ENCODE measurements at regions of chr1 and their contacts with region 1.

Region 1: DNA sequence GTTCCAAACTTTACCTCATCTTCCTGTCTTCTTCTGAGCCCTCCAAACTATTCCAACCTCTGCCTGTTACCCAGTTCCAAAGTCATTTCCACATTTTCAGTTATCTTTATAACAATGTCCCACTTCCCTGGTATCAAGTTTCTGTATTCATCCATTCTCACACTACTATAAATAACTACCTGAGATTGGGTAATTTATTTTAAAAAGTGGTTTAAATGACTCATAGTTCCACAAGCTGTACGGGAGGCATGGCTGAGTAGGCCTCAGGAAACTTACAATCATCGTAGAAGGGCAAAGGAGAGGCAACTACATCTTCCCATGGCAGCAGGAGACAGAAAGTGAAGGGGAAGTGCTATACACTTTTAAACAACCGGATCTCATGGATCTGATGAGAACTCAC is 428.5 kb upstream of the RGS18 start:
- DNase-seq: no peak
- ATAC-seq: no peak
- H3K4me3 ChIP-seq: no peak overlapping the region
- H3K27ac ChIP-seq: no peak overlapping the region
- H3K4me1 ChIP-seq: no peaks in the 10 kb centered on the region
- H3K27me3 ChIP-seq: no peaks in the 10 kb centered on the region
- CTCF ChIP-seq: no peak

Region 2: DNA sequence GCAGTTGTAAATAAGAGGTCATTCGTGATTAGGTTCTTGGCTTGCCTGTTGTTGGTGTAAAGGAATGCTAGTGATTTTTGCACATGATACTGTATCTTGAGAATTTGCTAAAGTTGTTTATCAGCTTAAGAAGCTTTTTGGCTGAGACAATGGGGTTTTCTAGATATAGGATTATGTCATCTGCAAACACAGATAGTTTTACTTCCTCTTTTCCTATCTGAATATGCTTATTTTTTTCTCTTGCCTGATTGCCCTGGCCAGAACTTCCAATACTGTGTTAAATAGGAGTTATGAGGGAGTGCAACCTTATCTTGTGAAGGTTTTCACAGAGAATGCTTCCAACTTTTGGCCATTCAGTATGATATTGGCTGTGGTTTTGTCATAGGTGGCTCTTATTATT is 147.6 kb before region 1 on chr1:
- intact Hi-C with region 1: no loop called
- DNase-seq: no peak
- ATAC-seq: no peak
- H3K4me3 ChIP-seq: no peak overlapping the region
- H3K27ac ChIP-seq: no peak overlapping the region
- H3K4me1 ChIP-seq: no peaks in the 10 kb centered on the region
- H3K27me3 ChIP-seq: no peaks in the 10 kb centered on the region
- CTCF ChIP-seq: no peak

Region 3: GRCh38 chr1:191707288-191707687 is 22.5 kb before region 1 on chr1:
- intact Hi-C with region 1: loop called in 1 of 2 experiments (anchors 2 kb)
- DNase-seq: no peak
- ATAC-seq: no peak
- H3K4me3 ChIP-seq: no peak overlapping the region
- H3K27ac ChIP-seq: no peak overlapping the region
- H3K4me1 ChIP-seq: no peaks in the 10 kb centered on the region
- H3K27me3 ChIP-seq: no peaks in the 10 kb centered on the region
- CTCF ChIP-seq: no peak